IMR-90 (cell line): ENCODE measurements at regions of chr17 and their contacts with region 1.

Region 1: DNA sequence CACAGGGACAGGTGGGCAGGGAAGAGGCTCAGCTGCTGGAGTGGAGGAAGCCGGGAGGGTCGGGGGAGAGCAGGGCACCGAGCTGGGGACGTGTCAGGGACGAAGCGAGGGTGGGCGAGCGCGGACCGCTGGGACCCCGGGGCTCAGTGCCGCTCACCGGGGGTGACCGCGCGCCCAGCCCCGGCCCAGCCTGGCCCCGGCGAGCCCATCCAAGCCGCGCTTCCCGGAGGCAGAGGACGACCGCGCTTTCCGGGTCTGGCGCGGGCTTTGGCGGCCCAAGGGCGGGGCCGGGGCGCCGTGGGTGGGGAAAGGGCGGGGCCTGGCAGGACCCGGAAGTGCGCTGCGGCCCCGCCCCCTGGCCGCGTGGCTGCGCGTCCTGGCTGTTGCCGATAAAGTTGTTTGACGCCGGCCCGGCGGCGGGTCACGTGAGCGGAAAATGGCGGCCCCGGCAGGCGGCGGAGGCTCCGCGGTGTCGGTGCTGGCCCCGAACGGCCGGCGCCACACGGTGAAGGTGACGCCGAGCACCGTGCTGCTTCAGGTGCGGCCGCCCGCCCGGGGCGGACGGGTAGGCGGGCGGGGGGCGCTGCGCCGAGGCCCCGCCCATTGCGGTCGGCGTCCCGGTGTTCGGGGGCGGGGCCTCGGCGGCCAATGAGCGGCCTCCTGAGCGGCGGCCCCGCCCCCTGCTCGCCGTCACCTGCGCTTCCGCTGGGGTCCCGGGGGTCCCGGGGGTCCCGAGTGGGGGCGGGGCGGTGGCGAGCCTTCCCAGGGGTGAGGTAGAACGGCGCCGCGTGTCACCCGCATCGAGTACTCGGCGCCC is at the start of gene ASPSCR1:
- DNase-seq: peak; percentile 91
- ATAC-seq: peak; percentile 98
- H3K4me3 ChIP-seq: peak within 1 kb of the TSS; percentile 88
- H3K27ac ChIP-seq: peak within 1 kb of the TSS; percentile 87
- H3K4me1 ChIP-seq: peaks cover 3% of the 10 kb centered on the region
- H3K27me3 ChIP-seq: no peaks in the 10 kb centered on the region
- CTCF ChIP-seq: 0 out of 2 replicates have a peak, but pooled peaks have one; percentile 1
- POLR2A ChIP-seq: peak; percentile 90
- RAD21 ChIP-seq: no peak
- total RNA-seq, gene ASPSCR1: 7.2 and 8.3 TPM in 2 replicates

Region 2: DNA sequence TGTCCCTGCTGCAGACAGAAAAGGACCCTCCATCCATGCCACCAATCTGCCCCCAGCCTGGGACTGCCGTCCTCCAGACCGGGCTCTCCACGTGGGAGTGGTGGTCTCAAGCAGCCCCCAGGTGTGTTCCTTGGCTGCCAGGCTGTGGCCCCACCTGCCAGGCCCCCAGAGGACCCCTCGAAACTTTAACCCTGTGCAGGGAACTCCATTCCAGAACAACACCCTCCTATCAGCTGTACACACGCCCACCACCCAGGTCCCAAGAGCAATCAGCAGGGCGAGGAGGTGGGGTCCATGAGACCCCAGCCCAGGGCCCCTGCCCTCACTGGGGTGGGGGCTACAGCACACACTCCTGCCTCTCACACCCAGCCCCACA is 41.7 kb before region 1 on chr17:
- CTCF ChIA-PET with region 1: no interaction called
- POLR2A ChIA-PET with region 1: no interaction called
- dilution Hi-C with region 1: no loop called
- in situ Hi-C with region 1: no loop called
- intact Hi-C with region 1: loop called (anchors 2 kb)
- DNase-seq: no peak
- ATAC-seq: no peak
- H3K4me3 ChIP-seq: no peak overlapping the region
- H3K27ac ChIP-seq: no peak overlapping the region
- H3K4me1 ChIP-seq: peaks cover 4% of the 10 kb centered on the region
- H3K27me3 ChIP-seq: peaks cover 5% of the 10 kb centered on the region; the same call in 1 of the 2 replicates
- CTCF ChIP-seq: no peak
- POLR2A ChIP-seq: no peak
- RAD21 ChIP-seq: no peak

Region 3: DNA sequence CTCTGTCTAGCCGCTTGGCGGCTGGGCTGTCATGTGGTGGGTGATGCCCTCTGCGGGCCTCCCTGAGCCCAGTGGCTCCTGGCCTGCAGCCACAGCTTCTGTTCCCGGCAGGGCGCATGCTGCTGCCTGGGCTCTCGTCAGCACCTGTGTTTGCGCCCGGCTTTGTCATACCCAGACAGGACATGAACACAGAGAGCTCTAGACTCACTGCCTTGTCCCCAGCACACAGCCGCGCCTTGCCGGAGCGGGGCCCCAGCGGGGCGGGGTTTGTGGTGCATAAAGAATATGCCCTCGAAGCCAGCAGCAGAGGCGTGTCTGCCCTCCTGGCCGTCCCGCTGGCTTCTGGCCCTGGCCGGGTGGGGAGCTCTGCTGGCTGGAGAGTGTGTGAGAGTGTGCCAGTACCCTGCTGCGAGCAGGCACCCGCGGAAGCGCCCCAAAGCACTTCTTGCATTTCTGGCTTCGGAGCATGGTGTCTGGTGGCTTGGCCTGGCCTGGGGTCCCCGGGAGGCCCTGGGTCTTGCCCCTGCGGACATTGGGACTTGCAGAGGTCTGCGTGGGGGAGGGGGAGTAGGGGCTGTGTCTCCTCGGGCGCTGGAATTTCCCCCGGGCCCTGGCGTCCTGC is 14.4 kb after region 1 on chr17:
- CTCF ChIA-PET with region 1: no interaction called
- POLR2A ChIA-PET with region 1: no interaction called
- dilution Hi-C with region 1: no loop called
- in situ Hi-C with region 1: no loop called
- intact Hi-C with region 1: loop called (anchors 1 kb)
- DNase-seq: peak; percentile 31
- ATAC-seq: peak; percentile 89
- H3K4me3 ChIP-seq: no peak overlapping the region
- H3K27ac ChIP-seq: no peak overlapping the region
- H3K4me1 ChIP-seq: peaks cover 13% of the 10 kb centered on the region
- H3K27me3 ChIP-seq: no peaks in the 10 kb centered on the region
- CTCF ChIP-seq: no peak
- POLR2A ChIP-seq: no peak
- RAD21 ChIP-seq: no peak